Activated T-helper 1 cell treated with anti-CD3 and anti-CD28 coated beads, Interleukin-12 subunit alpha, Interleukin-12 subunit beta, Interleukin-2, Interleukin-4 antibody, amounts not matched to agents 30 ng/mL and 10 ng/mL and 1 ng/mL, durations not matched to agents 14 hours and 24 hours and 36 hours (primary cell): ENCODE measurements at regions of chr11 and their contacts with region 1.

Region 1: DNA sequence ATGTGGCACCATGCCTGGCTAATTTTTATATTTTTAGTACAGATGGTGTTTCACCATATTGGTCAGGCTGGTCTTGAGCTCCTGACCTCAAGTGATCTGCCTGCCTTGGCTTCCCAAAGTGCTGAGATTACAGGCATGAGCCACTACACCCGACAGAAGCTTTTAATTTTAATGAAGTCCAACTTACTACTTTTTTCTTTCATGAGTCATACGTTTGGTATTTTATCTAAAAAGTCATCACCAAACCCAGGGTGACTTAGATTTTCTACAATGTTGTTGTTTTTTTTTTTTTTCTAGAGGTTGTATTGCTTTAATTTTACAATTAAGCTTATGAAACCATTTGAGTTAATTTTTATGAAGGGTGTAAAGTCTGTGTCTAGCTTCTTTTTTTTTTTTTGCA is 34.9 kb downstream of the JRKL start:
- DNase-seq: no peak
- H3K4me3 Mint-ChIP-seq: no peak overlapping the region
- H3K27ac Mint-ChIP-seq: no peak overlapping the region
- H3K4me1 Mint-ChIP-seq: peaks cover 6% of the 10 kb centered on the region
- H3K27me3 Mint-ChIP-seq: peaks cover 46% of the 10 kb centered on the region

Region 2: GRCh38 chr11:94519478-94520084 is 1905.1 kb before region 1 on chr11:
- intact Hi-C with region 1: loop called (anchors 2 kb)
- DNase-seq: no peak
- H3K4me3 Mint-ChIP-seq: no peak overlapping the region
- H3K27ac Mint-ChIP-seq: no peak overlapping the region
- H3K4me1 Mint-ChIP-seq: no peaks in the 10 kb centered on the region
- H3K27me3 Mint-ChIP-seq: peaks cover 27% of the 10 kb centered on the region

Region 3: GRCh38 chr11:94786264-94787126 is 1638.2 kb before region 1 on chr11:
- intact Hi-C with region 1: loop called (anchors 5 kb)
- DNase-seq: no peak
- H3K4me3 Mint-ChIP-seq: no peak overlapping the region
- H3K27ac Mint-ChIP-seq: no peak overlapping the region
- H3K4me1 Mint-ChIP-seq: no peaks in the 10 kb centered on the region
- H3K27me3 Mint-ChIP-seq: peaks cover 4% of the 10 kb centered on the region

Region 4: GRCh38 chr11:95835768-95836488 is 588.8 kb before region 1 on chr11:
- intact Hi-C with region 1: loop called (anchors 1 kb)
- DNase-seq: peak; percentile 29
- H3K4me3 Mint-ChIP-seq: no peak overlapping the region
- H3K27ac Mint-ChIP-seq: peak overlapping the region; percentile 0
- H3K4me1 Mint-ChIP-seq: no peaks in the 10 kb centered on the region
- H3K27me3 Mint-ChIP-seq: no peaks in the 10 kb centered on the region

Region 5: DNA sequence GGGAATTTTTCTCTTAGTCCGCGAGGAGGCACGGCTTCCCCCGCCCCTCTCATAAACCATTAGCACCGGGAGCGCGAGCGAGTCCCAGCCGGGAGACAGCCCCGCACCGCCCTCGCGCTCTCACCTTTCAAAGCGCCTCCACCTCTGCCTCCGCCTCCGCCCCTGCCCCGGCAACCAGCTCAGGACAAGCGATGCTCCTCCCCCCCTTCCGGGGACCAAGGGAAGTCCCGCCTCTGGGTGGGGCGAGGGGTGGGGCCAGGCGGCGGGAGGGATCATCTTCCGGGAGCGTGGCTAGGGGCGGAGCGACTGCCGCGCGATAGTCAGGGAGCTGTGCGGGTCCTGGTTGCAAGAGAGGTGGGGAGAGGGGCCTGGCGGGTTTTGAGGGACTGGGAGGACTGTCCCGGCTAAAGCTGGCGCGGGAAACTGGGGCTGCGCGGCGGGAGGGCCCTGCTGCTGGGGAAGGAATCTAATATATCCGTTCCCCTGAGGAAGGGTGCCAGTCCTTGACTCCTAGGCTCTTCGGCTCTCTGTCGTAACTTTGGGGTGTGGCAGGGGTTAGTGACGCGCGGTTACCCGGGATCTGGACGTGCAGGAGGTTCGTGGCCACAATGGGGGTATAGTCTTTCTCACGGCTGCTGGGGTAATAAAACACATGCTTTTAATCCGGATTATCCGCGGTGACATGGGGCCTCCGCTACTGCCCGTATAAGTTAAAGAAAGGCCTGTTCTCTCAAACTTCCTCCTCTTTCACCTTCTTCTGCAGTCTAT is 34.8 kb before region 1 on chr11 and contains the starts of genes CCDC82 and JRKL:
- intact Hi-C with region 1: loop called (anchors 2 kb)
- DNase-seq: peak; percentile 97
- H3K4me3 Mint-ChIP-seq: peak within 1 kb of the TSS; percentile 95
- H3K27ac Mint-ChIP-seq: peak within 1 kb of the TSS; percentile 85
- H3K4me1 Mint-ChIP-seq: peaks cover 64% of the 10 kb centered on the region
- H3K27me3 Mint-ChIP-seq: no peaks in the 10 kb centered on the region
- total RNA-seq, gene CCDC82: 28.5 and 29.9 TPM in 2 replicates
- total RNA-seq, gene JRKL: 9.6 and 10.2 TPM in 2 replicates